ENCODE measurements at regions of chr17 and their contacts with region 1.

Region 1: DNA sequence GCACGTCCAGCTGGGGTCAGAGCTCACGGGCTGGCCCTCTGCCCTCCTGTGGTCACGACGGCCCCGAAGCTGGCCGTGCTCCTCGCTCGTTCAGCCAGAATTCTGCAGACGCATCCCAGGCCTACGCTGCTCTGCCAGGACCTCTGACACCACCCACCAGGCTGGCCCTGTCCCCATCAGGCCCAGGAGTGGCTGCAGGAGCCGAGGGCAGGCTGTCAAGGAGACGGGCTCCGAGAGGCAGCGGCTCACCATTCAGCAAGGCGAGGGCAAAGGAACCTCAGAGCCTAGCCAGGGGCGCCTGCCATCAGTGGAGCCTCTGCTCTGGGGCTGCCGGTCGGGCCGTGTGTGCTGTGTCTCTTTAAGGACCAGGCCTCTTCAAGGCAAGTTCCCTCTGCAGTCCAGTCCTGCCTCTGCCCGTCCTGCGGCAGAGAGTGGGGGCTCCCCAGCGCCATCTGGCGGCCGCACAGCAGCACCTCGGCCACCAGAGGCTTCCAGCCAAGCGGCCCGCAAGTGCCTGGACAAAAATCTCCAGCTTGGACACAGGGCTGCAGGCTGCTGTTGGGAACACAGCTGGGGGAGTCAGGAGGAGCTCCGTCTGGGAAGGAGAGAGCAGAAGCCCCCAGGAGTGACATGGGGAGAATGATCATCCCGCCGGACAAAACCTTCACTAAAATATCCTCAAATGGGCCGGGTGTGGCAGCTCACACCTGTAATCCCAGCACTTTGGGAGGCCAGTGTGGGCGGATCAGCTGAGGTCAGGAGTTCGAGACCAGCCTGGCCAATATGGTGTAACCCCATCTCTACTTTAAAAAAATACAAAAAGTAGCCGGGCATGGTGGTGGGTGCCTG is 7.4 kb upstream of the ABR start:
- H3K4me3 ChIP-seq: no peak overlapping the region
- H3K27ac ChIP-seq: no peak overlapping the region
- H3K4me1 ChIP-seq: no peaks in the 10 kb centered on the region; the same call in 1 of the 2 replicates
- CTCF ChIP-seq: peak; percentile 98

Region 2: DNA sequence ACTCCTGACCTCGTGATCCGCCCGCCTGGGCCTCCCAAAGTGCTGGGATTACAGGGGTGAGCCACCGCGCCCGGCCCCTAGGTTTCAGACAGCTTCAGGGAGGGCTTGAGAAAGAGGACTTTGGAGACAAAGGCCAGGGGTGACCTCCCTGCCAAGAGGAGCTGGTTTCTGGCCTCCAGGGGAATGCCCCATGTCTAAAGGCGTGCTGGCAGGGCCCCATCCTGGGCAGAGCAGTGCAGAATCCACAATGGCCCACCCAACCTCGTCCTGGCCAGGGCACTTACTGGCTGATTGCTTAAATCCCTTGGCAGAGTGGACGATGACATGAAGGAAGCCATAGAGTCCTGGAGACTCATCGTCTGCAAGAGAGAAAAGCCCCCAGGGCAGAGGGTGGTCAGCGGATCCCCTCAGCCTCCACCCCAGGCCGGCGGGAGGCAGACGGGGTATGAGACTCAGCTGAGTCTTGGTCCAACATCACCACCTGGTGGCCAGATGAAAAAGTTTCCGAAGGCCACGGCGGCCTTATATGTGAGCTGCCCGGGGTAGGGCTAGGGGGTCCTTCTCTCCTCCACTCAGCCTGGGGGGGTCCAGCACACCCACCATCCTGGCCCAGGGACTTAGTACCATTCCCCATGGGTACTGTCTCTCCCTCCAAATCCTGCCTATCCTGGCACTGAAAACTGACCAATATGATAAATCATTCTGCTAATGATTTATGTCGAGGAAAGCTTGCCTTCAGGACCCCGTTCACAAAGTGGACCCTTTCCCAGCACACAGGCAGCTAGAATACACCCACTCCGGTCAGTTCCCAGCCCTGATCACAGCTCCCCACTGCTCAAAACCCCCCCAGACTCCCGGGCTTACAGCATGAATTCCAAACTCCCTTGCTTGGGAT is 131.1 kb before region 1 on chr17:
- CTCF ChIA-PET with region 1: interaction called, 25 read pairs
- POLR2A ChIA-PET with region 1: no interaction called
- H3K4me3 ChIP-seq: no peak overlapping the region
- H3K27ac ChIP-seq: 0 out of 2 replicates have a peak overlapping the region, but pooled peaks have one; percentile 41
- H3K4me1 ChIP-seq: no peaks in the 10 kb centered on the region
- CTCF ChIP-seq: peak; percentile 77

Region 3: GRCh38 chr17:1122533-1123392 is 64.4 kb before region 1 on chr17:
- CTCF ChIA-PET with region 1: interaction called, 75 read pairs
- POLR2A ChIA-PET with region 1: no interaction called
- H3K4me3 ChIP-seq: no peak overlapping the region
- H3K27ac ChIP-seq: no peak overlapping the region
- H3K4me1 ChIP-seq: no peaks in the 10 kb centered on the region; the same call in 1 of the 2 replicates
- CTCF ChIP-seq: peak; percentile 83

Region 4: DNA sequence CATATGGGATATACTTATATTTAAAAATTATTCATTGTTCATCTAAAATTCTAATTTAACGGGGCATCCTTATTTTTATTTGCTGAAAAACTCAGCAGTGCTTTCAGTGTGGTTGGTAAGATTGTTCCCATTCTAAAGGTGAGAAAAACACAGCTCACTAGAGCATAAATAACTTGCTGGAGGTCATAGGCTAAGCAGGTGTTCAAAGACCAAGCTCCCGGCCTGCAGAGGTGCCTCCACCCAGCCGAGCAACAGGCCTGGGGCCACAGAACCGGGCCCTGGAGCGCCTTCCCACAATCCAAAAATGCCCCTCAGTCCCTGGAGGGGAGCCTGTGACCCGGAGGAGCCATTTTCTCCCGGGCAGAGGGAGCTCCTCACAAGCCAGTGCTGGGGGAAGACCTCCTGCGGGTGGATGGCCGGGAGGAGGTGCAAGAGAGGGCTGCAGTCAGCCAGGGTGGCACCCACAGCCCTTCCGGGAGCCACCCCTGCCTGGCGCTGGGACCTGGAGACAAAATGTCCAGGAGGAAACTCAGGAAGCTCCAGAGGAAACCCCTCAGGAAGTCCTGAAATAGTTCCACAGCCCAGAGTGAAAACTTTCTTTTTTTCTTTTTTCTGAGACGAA is 22.1 kb before region 1 on chr17:
- CTCF ChIA-PET with region 1: interaction called, 13 read pairs
- POLR2A ChIA-PET with region 1: no interaction called
- H3K4me3 ChIP-seq: no peak overlapping the region
- H3K27ac ChIP-seq: no peak overlapping the region
- H3K4me1 ChIP-seq: peaks cover 3% of the 10 kb centered on the region; the same call in 1 of the 2 replicates
- CTCF ChIP-seq: no peak

Region 5: GRCh38 chr17:1206026-1206777 is 19.1 kb after region 1 on chr17:
- CTCF ChIA-PET with region 1: interaction called, 84 read pairs
- POLR2A ChIA-PET with region 1: no interaction called
- H3K4me3 ChIP-seq: no peak overlapping the region
- H3K27ac ChIP-seq: no peak overlapping the region
- H3K4me1 ChIP-seq: 0 out of 2 replicates have a peak, but pooled peaks cover under 1% of the 10 kb centered on the region
- CTCF ChIP-seq: no peak